ENCODE measurements at regions of chr13 and their contacts with region 1.

Region 1: DNA sequence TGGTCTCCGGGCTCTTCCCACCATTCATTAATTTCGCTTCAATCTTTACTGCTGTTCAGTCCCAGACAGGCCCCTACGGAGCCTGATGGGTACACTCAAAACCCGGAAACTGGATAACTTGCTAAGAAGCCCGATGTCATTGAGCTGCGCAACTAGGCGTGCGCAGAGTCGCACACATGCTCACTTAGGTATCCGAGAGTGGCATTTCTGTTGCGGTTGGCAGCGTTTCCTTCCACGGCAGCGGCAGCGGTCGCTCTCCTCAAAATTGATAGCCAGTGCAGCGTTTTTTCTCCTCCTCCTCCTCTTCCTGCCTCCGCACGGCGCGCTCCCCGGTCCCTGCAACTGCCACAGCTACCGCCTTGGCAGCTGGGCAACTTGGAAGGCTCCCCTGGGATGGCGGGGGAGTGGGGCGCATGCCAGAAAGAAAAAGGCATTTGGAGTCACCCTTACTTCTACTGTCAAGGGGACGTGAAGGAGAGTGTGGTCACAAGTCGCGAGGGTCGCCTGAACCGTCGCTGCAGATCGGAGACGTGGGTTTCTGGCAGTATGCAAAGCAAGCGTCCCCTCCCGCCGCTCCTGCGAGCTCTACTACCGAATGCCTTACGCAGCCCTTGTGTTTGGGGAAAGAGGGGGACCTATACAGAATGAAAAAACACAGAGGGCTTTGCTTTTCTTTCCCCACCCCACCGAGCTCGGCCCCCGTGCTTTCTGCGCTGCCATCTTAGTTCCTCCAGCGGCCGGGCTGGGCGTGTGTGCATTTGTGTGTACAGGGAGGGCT is 2.4 kb upstream of the MYCBP2 start:
- DNase-seq: peak; percentile 75 to 99 (median 88)
- ATAC-seq: peak; percentile 65
- H3K4me3 ChIP-seq: peak overlapping the region; percentile 81 to 98
- H3K4me3 Mint-ChIP-seq: peak overlapping the region; percentile 91
- H3K27ac ChIP-seq: peak overlapping the region; percentile 64 to 85
- H3K27ac Mint-ChIP-seq: peak overlapping the region; percentile 97
- H3K4me1 ChIP-seq: peaks cover 42% of the 10 kb centered on the region
- H3K4me1 Mint-ChIP-seq: peaks cover 49% of the 10 kb centered on the region
- H3K27me3 ChIP-seq: no peaks in the 10 kb centered on the region
- H3K27me3 Mint-ChIP-seq: no peaks in the 10 kb centered on the region
- CTCF ChIP-seq: no peak

Region 2: DNA sequence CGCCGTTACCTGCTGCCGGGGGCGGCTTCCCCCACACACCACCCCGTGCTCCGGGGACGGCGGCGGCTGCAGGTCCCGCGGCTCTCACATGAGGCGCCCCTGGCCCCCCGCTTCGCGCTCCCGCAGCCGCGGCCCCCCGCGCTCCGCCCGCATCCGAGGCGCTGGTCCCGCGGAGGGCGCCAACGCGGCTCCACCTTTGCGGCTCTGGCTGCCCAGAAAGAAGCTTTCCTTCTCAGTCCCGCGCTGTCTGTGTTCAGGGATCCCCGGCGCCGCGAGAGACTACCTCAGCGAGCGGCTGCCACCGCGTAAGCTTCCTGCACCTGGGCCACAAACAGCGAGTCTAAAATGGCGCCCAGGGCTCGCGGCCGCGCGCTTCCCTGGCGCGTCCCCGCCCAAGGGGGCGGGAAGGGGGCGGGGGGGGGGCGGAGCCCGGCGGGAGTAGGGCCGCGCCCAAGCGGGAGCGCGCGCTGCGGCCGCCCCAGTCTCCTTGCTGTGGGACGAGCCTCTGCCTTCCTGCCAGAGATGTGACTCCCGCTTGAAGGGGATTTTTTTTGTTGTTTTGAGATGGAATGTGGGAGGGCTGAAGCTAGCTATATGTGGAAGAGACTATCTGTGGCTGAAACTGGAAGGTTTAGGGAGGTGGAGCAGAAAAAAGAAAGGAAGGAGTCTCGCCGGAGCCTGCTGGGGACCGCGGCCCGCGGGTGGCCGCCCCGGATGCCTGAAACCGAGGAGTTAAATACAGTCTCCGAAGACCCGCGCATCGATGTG is 302.3 kb before region 1 on chr13 and contains the start of gene FBXL3:
- CTCF ChIA-PET with region 1: no interaction called
- POLR2A ChIA-PET with region 1: interaction called, 15 read pairs
- intact Hi-C with region 1: loop called (anchors 1 to 2 kb)
- DNase-seq: peak; percentile 68 to 92 (median 80)
- ATAC-seq: peak; percentile 64
- H3K4me3 ChIP-seq: peak within 1 kb of the TSS; percentile 73 to 80
- H3K4me3 Mint-ChIP-seq: peak within 1 kb of the TSS; percentile 97
- H3K27ac ChIP-seq: peak within 1 kb of the TSS; percentile 80 to 97
- H3K27ac Mint-ChIP-seq: peak within 1 kb of the TSS; percentile 99
- H3K4me1 ChIP-seq: peaks cover 40% of the 10 kb centered on the region
- H3K4me1 Mint-ChIP-seq: peaks cover 51% of the 10 kb centered on the region
- H3K27me3 ChIP-seq: no peaks in the 10 kb centered on the region
- H3K27me3 Mint-ChIP-seq: no peaks in the 10 kb centered on the region
- CTCF ChIP-seq: no peak
- total RNA-seq, gene FBXL3: 91.3 to 97.0 TPM

Region 3: DNA sequence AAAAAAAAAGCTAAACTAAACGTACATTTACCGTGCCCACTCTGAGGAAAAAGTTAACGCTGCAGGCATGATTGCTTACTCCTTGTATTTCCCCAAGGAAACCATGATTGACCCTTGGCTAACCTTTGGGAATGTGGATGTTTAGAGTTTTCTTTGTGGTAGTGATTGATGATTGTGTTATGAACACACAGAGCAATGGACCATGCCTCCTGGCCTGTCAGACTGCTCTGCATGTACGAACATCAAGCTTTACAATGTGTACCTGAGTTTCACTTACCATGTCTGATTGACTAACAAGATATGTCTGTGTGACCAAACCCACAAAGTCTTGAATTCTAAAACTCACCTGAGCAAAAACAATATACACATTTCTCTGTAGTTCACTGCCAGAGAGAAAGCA is 37.5 kb before region 1 on chr13:
- CTCF ChIA-PET with region 1: interaction called, 3 read pairs
- POLR2A ChIA-PET with region 1: interaction called, 4 read pairs
- intact Hi-C with region 1: loop called (anchors 5 kb)
- DNase-seq: no peak
- ATAC-seq: no peak
- H3K4me3 ChIP-seq: no peak overlapping the region
- H3K4me3 Mint-ChIP-seq: no peak overlapping the region
- H3K27ac ChIP-seq: no peak overlapping the region
- H3K27ac Mint-ChIP-seq: no peak overlapping the region
- H3K4me1 ChIP-seq: no peaks in the 10 kb centered on the region
- H3K4me1 Mint-ChIP-seq: peaks cover 33% of the 10 kb centered on the region
- H3K27me3 ChIP-seq: no peaks in the 10 kb centered on the region
- H3K27me3 Mint-ChIP-seq: no peaks in the 10 kb centered on the region
- CTCF ChIP-seq: no peak

Region 4: DNA sequence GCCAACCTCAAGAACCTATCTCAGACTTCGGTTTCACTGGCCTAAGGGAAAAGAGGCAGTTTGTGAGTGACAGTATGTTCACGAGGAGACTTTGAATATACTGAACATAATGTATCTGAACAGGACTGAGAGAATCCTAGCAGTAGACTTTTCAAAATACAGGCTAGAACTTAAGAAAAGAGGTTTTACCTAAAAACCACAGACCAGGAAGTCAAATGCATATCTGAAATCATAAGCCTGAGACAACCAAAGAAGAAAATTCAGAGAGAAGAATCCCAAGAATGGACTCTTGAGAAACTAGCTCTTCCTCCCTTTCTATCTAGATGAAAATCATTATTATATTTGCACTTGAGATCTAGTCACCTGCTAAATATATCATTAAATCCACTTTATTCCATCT is 20.1 kb before region 1 on chr13:
- CTCF ChIA-PET with region 1: interaction called, 9 read pairs
- POLR2A ChIA-PET with region 1: interaction called, 10 read pairs
- intact Hi-C with region 1: loop called (anchors 2 kb)
- DNase-seq: no peak
- ATAC-seq: no peak
- H3K4me3 ChIP-seq: no peak overlapping the region
- H3K4me3 Mint-ChIP-seq: peak overlapping the region; percentile 9
- H3K27ac ChIP-seq: no peak overlapping the region
- H3K27ac Mint-ChIP-seq: peak overlapping the region; percentile 76
- H3K4me1 ChIP-seq: peaks cover 76% of the 10 kb centered on the region
- H3K4me1 Mint-ChIP-seq: peaks cover 86% of the 10 kb centered on the region
- H3K27me3 ChIP-seq: no peaks in the 10 kb centered on the region
- H3K27me3 Mint-ChIP-seq: no peaks in the 10 kb centered on the region
- CTCF ChIP-seq: no peak

Region 5: GRCh38 chr13:77480066-77480465 is 150.7 kb after region 1 on chr13:
- CTCF ChIA-PET with region 1: interaction called, 42 read pairs
- POLR2A ChIA-PET with region 1: interaction called, 13 read pairs
- intact Hi-C with region 1: loop called (anchors 1 to 2 kb)
- DNase-seq: no peak
- ATAC-seq: no peak
- H3K4me3 ChIP-seq: no peak overlapping the region
- H3K4me3 Mint-ChIP-seq: no peak overlapping the region
- H3K27ac ChIP-seq: no peak overlapping the region
- H3K27ac Mint-ChIP-seq: no peak overlapping the region
- H3K4me1 ChIP-seq: no peaks in the 10 kb centered on the region
- H3K4me1 Mint-ChIP-seq: peaks cover 10% of the 10 kb centered on the region
- H3K27me3 ChIP-seq: no peaks in the 10 kb centered on the region
- H3K27me3 Mint-ChIP-seq: no peaks in the 10 kb centered on the region
- CTCF ChIP-seq: no peak

Measured in CD8-positive, alpha-beta T cell (primary cell).